ENCODE measurements at regions of chr5 and their contacts with region 1.

Region 1: DNA sequence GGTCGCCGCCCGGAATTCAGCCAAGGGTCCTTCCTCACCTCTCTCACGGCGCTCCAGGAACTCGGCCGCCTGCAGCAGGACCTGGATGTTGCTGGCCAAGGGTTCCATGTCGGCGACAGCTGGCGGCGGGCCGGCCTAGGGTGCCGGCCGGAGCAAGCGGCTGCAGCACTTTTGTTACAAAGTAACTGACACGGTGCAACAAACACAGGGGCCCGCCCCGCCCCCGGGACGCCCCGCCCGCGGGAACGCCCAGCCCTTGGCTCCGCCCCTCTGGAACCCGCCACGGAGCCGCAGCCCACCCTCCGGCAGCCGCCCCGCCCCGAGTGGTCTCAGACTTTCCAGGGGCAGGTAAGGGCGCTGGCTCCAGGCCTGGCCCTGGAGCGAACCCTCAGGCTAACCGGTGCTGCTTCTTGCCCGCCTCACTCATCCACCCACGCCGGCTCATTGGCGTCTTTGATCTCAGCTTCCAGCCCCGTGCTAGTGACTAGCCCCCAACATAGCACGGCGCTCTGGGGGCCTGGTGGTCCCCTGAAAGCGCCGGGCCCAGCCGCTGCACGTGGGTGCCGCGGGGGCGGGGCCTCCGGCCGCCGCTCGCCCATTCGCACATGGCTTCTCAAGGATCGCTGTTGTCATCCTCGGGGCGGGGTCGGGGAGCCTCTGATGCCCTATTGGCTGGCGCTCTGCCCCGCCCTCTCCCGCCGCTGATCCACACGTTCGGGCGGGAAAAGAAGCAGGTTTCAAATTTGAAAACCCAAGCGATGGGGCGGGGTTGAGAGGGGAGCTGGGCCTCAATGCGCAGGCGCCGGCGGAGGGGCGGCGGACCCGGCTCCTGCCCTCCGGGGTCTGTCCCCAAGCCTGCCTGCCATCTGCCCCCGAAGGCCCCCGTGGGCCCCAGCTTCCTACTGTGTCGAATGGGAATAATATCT is at the start of gene MXD3:
- H3K4me3 ChIP-seq: peak within 1 kb of the TSS; percentile 86
- H3K27ac ChIP-seq: peak within 1 kb of the TSS; percentile 67
- H3K4me1 ChIP-seq: peaks cover 5% of the 10 kb centered on the region
- CTCF ChIP-seq: no peak

Region 2: DNA sequence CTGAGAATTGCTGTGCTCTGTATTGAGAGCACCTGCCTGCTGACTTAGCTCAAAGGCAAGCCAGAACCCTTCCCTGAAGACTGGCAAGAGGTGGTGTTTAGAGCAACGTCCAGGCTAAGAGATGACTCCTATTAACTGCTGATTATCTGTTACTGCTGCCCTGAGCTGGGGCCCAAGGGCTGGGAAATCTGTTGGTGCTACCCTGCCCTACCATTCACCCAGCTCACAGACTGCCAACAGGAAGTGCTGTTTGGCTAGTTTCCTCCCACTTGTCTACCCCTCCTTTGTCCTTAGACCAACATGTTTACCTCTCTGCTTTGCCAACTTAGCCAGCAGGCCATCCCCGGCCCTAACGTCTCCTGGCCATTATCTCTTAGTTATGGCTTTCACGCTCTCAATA is 15.4 kb before region 1 on chr5:
- CTCF ChIA-PET with region 1: interaction called, 15 read pairs
- POLR2A ChIA-PET with region 1: interaction called, 10 read pairs
- H3K4me3 ChIP-seq: no peak overlapping the region
- H3K27ac ChIP-seq: no peak overlapping the region
- H3K4me1 ChIP-seq: peaks cover 6% of the 10 kb centered on the region; the same call in 1 of the 2 replicates
- CTCF ChIP-seq: no peak

Region 3: DNA sequence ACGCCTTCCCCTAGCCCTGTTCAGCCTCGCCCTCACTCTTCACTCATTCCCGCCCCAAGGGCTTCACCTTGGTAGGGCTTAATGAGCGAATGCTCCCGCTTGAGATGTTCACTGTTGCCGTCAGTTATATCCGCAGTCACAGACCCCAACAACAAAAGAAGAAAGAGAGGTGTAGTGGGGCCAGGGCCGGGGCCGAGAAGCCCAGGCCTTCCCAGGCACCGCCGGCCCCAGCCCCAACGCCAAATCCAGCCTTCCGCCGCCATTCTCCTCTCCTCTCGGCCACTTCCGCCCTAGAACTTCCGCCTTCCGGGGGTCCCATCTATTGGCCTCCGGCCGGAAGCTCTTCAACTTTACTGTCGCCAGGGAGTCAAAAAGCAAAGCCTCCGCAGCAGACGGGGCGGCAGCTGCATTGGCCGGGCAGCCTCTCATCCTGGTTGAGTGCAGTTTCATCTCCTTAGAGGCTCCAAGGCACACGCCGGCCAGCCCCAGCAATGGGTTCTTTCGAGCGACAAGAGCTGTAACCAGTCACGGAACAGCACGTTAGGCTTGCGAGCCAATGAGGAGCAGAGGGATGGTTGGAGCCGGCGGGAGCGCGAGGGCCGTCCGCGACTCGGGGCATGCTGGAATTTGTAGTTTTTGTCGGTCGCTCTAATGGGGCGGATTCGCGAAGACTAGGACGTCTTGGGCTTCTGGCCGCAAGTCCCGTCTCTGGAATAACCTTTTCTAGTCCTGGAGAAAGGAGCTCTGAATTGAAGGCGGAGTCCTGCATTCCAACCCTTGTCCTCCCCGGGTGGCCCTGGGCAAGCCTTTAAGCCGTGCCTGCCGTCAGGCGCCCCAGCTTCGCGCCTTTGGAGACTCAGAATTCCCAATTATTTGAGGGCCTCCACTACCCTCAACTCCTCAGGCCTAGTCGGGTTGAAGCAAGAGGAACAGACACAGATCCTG is 39.7 kb after region 1 on chr5 and contains the start of gene LMAN2:
- CTCF ChIA-PET with region 1: interaction called, 9 read pairs
- POLR2A ChIA-PET with region 1: interaction called, 12 read pairs
- H3K4me3 ChIP-seq: peak within 1 kb of the TSS; percentile 61
- H3K27ac ChIP-seq: peak within 1 kb of the TSS; percentile 92
- H3K4me1 ChIP-seq: peaks cover 20% of the 10 kb centered on the region; the same call in 1 of the 2 replicates
- CTCF ChIP-seq: no peak

Region 4: GRCh38 chr5:177370488-177371119 is 58.6 kb after region 1 on chr5:
- CTCF ChIA-PET with region 1: interaction called, 9 read pairs
- POLR2A ChIA-PET with region 1: interaction called, 12 read pairs
- H3K4me3 ChIP-seq: peak overlapping the region; percentile 63
- H3K27ac ChIP-seq: peak overlapping the region; percentile 88; the same call in 1 of the 2 replicates
- H3K4me1 ChIP-seq: peaks cover 6% of the 10 kb centered on the region; the same call in 1 of the 2 replicates
- CTCF ChIP-seq: peak; percentile 63

Region 5: DNA sequence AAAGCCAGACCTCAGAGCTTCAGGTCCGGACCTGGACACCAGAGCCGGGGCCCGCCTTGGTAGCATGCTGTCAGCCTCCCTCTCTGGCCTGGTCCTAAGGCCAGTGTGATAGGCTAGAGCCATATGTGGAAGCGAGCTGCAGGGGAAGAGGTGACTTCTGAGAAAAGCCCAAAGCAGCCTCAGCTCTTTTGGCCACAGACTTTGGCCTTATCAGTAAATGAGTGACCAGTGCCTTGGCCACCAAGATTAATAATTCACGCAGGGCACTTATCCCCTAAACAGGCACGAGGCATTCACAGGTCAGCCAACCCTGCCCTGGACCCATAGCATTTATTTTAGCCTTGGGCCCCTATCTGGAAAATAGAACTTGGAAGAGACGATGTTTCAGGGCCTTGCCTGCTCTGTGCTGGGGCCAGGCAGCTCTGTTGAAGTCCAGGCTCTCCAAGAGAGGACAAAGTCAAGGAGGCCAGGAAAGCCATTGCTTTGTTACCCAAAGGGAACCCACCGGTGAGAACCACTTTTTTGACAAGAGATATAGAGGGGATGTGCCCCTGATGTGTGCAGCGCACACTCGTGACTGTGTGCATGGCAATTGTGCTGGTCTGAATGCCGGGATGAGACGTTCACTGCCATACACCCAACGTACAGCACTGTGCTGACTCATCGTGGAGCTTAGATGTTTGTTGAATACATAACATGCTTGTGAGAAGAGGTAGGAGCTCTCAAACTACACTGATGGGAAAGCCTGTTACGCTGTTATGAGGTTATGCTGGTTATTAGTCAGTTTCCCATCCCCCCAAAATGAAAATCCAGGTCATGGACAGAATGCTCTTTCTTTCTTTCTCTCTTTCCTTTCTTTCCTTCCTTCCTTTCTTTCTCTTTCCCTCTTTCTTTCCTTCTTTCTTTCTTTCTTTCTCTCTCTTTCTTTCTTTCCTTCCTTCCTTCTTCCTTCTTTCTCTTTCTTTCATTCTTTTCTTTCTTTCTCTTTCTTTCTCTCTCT is 67.2 kb after region 1 on chr5:
- CTCF ChIA-PET with region 1: interaction called, 13 read pairs
- POLR2A ChIA-PET with region 1: no interaction called
- H3K4me3 ChIP-seq: no peak overlapping the region
- H3K27ac ChIP-seq: no peak overlapping the region
- H3K4me1 ChIP-seq: peaks cover 6% of the 10 kb centered on the region; the same call in 1 of the 2 replicates
- CTCF ChIP-seq: no peak

Region 6: DNA sequence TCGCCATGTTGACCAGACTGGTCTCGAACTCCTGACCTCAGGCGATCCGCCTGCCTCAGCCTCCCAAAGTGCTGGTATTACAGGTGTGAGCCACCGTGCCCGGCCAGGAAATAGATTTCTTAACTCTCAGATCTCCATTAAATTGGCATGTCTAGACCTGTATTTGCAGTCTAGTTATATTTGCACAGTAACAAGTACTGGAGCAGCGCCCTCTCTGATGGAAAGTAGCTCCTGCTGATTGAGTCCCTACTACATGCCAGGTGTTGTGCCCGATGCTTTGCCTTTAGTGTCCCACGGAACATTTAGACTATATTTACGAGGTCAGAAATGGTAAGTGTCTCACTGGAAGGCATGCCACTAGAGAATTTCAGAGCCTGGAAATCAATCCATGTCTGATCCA is 264.2 kb after region 1 on chr5:
- CTCF ChIA-PET with region 1: no interaction called
- POLR2A ChIA-PET with region 1: no interaction called
- H3K4me3 ChIP-seq: no peak overlapping the region
- H3K27ac ChIP-seq: no peak overlapping the region
- H3K4me1 ChIP-seq: no peaks in the 10 kb centered on the region
- CTCF ChIP-seq: no peak

Measured in HEK293 (cell line).